ENCODE measurements at regions of chr2 and their contacts with region 1.

Region 1: GRCh38 chr2:64988420-64989125 is 626 bp upstream of the SLC1A4 start:
- DNase-seq: peak; percentile 74
- ATAC-seq: peak; percentile 37
- H3K4me3 Mint-ChIP-seq: peak overlapping the region; percentile 68
- H3K27ac Mint-ChIP-seq: peak overlapping the region; percentile 55
- H3K4me1 Mint-ChIP-seq: peaks cover 46% of the 10 kb centered on the region
- H3K27me3 Mint-ChIP-seq: peaks cover 4% of the 10 kb centered on the region

Region 2: DNA sequence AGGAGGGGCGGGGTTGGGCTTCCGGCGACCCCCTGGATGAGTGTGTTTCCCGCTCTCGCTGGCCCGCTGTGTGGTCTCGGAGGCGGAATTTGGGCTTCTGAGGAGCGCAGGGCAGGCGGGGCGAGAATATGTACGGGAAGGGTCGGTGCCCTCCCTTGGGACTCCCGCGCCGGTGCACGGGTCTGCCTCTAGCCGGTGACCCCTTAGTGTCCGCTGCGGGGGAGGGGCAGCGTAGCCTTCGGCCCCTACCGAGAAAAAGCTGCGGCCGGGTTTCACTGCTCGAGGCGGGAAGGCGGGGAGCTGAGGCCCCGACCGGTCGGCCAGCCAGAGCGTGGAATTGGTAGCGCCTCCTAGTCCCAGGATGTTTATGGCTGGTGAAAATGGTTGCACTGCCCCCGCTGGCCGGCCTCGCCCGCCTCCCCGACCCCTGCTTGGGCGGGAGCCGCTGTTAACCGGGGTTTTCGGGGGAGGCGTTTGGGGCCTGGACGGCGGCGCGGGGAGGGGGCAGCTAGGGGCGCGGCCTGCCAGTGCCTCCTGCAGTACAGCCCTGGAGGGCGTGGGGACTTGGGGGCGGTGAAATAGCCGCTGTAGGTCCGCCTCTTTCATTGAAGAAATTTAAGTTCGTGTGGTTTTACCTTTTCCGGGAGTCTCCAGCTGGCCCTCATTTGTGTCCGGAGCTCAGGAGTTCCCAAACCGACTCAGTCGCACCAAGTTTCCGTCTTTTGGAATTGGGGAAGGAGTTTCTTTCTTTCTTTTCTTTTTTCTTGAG is 1147.1 kb before region 1 on chr2 and contains the start of gene UGP2:
- CTCF ChIA-PET with region 1: no interaction called
- POLR2A ChIA-PET with region 1: interaction called, 10 read pairs
- intact Hi-C with region 1: no loop called
- DNase-seq: peak; percentile 91
- ATAC-seq: peak; percentile 72
- H3K4me3 Mint-ChIP-seq: peak within 1 kb of the TSS; percentile 92
- H3K27ac Mint-ChIP-seq: peak within 1 kb of the TSS; percentile 98
- H3K4me1 Mint-ChIP-seq: peaks cover 39% of the 10 kb centered on the region
- H3K27me3 Mint-ChIP-seq: no peaks in the 10 kb centered on the region
- total RNA-seq, gene UGP2: 98.4 to 144 TPM

Region 3: DNA sequence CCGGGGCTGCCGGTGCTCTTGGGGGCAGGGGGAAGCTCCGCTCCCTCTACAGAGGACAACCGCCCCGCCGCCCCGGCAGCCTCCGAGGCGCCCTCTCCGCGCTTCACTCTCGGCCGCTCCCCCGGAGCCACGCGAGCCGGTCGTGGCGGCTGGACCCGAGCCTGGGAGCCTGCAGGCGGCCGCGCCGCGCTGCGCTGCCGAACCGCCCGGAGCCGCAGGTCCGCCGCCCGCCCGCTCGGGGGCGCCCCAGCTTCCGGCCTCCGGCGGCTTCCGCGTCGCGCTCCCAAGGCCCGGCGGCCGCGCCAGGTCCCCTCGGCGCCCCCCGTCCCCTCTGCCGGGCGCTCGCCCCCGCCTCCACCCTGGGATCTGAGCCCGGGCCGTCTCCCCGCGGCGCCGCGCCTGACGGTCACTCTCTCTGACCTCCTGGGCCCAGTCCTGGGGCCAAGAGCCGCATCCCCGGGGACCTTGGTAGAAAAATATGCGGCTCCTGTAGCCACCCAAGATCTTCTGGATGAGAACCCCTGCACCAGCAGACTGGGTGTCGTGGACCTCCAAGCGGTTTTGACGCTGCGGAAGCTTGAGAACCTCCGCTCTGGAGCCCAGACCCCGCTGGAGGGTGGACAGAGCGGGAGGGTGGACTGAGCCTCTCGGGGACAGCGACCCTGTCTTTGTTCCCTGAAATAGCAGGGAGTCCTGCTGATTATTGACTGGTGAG is 379.2 kb before region 1 on chr2:
- CTCF ChIA-PET with region 1: interaction called, 3 read pairs
- POLR2A ChIA-PET with region 1: no interaction called
- intact Hi-C with region 1: loop called in 1 of 2 experiments (anchors 5 kb)
- DNase-seq: peak; percentile 82
- ATAC-seq: peak; percentile 61
- H3K4me3 Mint-ChIP-seq: peak overlapping the region; percentile 65
- H3K27ac Mint-ChIP-seq: no peak overlapping the region
- H3K4me1 Mint-ChIP-seq: peaks cover 25% of the 10 kb centered on the region
- H3K27me3 Mint-ChIP-seq: no peaks in the 10 kb centered on the region

Region 4: DNA sequence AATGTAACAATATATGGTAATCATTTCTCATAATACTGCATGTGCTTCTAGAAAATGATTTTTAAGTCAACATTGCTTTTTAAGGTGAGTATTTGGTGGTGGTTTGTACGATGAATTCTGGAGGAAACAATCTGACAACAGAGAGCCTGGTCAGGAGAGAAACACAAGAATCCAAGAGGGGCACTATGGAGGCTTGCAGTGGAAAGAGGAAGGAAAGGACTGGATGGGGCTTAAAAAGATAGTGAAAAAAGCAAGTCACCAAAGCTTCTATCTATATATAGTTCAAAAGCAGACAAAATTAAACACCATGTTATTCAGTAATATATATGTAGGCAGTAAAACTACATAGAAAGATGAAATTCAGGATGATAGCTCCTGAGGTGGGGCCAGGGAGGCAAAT is 225.4 kb before region 1 on chr2:
- CTCF ChIA-PET with region 1: no interaction called
- POLR2A ChIA-PET with region 1: no interaction called
- intact Hi-C with region 1: no loop called
- DNase-seq: no peak
- ATAC-seq: no peak
- H3K4me3 Mint-ChIP-seq: no peak overlapping the region
- H3K27ac Mint-ChIP-seq: no peak overlapping the region
- H3K4me1 Mint-ChIP-seq: peaks cover 24% of the 10 kb centered on the region
- H3K27me3 Mint-ChIP-seq: no peaks in the 10 kb centered on the region

Region 5: GRCh38 chr2:64876137-64876647 is 112.4 kb before region 1 on chr2:
- CTCF ChIA-PET with region 1: no interaction called
- POLR2A ChIA-PET with region 1: no interaction called
- intact Hi-C with region 1: no loop called
- DNase-seq: no peak
- ATAC-seq: no peak
- H3K4me3 Mint-ChIP-seq: no peak overlapping the region
- H3K27ac Mint-ChIP-seq: no peak overlapping the region
- H3K4me1 Mint-ChIP-seq: peaks cover 3% of the 10 kb centered on the region
- H3K27me3 Mint-ChIP-seq: no peaks in the 10 kb centered on the region

Region 6: GRCh38 chr2:64914735-64915509 is 73.7 kb before region 1 on chr2:
- CTCF ChIA-PET with region 1: interaction called, 17 read pairs
- POLR2A ChIA-PET with region 1: no interaction called
- intact Hi-C with region 1: loop called (anchors 1 kb)
- DNase-seq: no peak
- ATAC-seq: no peak
- H3K4me3 Mint-ChIP-seq: no peak overlapping the region
- H3K27ac Mint-ChIP-seq: no peak overlapping the region
- H3K4me1 Mint-ChIP-seq: peaks cover 19% of the 10 kb centered on the region
- H3K27me3 Mint-ChIP-seq: no peaks in the 10 kb centered on the region

Region 7: DNA sequence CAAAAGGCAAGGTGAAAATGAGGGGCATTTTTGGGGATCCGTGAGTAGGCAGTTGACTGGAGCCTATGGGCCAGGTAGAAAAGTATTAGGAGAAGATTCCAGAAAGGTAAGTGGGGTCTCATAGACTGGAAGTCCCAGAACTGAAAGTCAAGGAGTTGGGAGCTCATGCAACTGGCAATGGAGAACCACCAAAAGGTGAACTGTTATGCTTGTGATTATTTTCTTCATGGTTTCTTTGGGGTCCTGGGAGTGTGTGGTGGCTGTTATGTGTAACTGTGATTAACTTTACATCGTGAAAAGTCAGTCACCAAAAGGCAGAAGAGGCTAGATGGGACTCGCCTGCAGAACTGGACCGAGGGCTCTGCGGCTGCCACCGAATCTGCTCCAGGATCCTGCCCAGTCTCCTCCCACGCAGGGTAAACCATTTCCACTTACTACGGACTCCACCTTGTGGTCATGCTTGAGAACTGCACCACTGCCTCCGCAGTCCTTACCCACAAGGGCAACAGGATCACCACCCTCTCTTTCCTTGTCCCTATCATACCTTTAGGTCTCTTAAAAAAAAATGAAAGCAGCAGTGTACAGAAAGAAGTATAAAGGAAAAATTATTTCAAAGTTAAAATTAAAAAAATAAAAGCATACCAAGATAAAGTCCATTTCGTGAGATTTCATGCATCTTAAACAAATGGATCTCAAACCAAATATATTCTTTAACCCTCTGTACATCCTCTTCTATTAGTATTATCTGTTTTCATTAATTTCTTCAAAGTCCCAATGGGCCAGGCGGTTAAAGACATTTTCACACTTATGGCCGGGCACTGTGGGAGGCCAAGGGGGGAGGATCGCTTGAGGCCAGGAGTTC is 52.1 kb after region 1 on chr2:
- CTCF ChIA-PET with region 1: no interaction called
- POLR2A ChIA-PET with region 1: no interaction called
- intact Hi-C with region 1: loop called in 1 of 2 experiments (anchors 2 kb)
- DNase-seq: peak; percentile 85
- ATAC-seq: peak; percentile 83
- H3K4me3 Mint-ChIP-seq: no peak overlapping the region
- H3K27ac Mint-ChIP-seq: peak overlapping the region; percentile 33
- H3K4me1 Mint-ChIP-seq: peaks cover 7% of the 10 kb centered on the region
- H3K27me3 Mint-ChIP-seq: no peaks in the 10 kb centered on the region

Region 8: DNA sequence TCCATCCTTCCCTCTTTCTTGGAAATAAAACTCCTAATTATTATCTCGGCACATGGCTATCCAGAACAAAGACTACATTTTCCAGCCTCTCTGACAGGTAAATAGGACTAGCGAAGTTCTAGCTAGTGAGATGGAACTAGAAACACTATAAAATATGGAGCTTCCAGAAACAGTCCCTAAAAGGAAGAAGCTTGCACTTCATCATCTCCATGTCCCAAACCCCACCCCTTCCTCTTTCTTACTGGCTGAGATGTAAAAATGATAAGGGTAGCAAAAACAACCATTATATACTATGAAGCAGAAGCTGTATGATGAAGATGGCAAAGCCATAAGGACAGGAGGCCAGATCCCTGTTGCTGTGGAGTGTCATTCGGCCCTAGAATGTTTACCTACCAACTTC is 227.4 kb after region 1 on chr2:
- CTCF ChIA-PET with region 1: no interaction called
- POLR2A ChIA-PET with region 1: no interaction called
- intact Hi-C with region 1: no loop called
- DNase-seq: no peak
- ATAC-seq: no peak
- H3K4me3 Mint-ChIP-seq: no peak overlapping the region
- H3K27ac Mint-ChIP-seq: no peak overlapping the region
- H3K4me1 Mint-ChIP-seq: no peaks in the 10 kb centered on the region
- H3K27me3 Mint-ChIP-seq: no peaks in the 10 kb centered on the region

Region 9: GRCh38 chr2:65227425-65228262 is 239.1 kb after region 1 on chr2 and contains the start of gene ACTR2:
- CTCF ChIA-PET with region 1: no interaction called
- POLR2A ChIA-PET with region 1: no interaction called
- intact Hi-C with region 1: loop called (anchors 1 to 5 kb)
- DNase-seq: peak; percentile 97
- ATAC-seq: peak; percentile 96
- H3K4me3 Mint-ChIP-seq: peak within 1 kb of the TSS; percentile 95
- H3K27ac Mint-ChIP-seq: peak within 1 kb of the TSS; percentile 98
- H3K4me1 Mint-ChIP-seq: peaks cover 30% of the 10 kb centered on the region
- H3K27me3 Mint-ChIP-seq: no peaks in the 10 kb centered on the region
- total RNA-seq, gene ACTR2: 326 to 388 TPM

Measured in activated CD4-positive, alpha-beta T cell treated with anti-CD3 and anti-CD28 coated beads for 36 hours (primary cell).